ENCODE measurements at regions of chr7 and their contacts with region 1.

Region 1: GRCh38 chr7:50467817-50468610 is 17.9 kb upstream of the FIGNL1 start:
- DNase-seq: peak; percentile 89
- ATAC-seq: peak; percentile 96
- H3K4me3 Mint-ChIP-seq: no peak overlapping the region
- H3K27ac Mint-ChIP-seq: peak overlapping the region; percentile 24
- H3K4me1 Mint-ChIP-seq: peaks cover 13% of the 10 kb centered on the region
- H3K27me3 Mint-ChIP-seq: peaks cover 6% of the 10 kb centered on the region

Region 2: DNA sequence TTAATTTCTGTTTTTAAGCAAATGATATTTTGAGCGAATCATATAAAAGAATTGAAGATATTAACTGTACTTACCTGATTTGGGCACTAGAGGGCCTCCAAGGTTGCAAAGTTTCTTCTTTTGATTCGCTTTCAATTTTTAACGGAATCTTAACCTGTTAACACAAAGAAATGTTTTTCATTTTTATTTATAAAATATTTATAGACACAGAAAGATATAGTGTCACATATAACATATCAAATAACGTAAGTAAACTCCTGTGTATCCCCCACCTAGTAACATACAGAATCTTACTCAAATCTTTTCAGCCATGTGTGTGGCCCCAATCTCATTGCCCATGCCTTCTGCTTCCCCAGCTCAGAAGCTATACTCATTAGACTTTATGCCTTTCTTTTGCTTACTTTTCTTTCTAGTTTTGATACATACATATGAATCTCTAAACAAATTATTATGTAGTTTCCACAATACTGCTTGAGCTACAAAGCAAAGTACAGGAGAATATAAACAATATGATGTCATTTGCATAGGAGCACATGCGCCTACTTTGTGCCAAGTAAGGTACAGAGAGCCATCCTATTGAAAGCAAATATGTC is 325.5 kb before region 1 on chr7:
- CTCF ChIA-PET with region 1: interaction called, 14 read pairs
- DNase-seq: no peak
- ATAC-seq: peak; percentile 67
- H3K4me3 Mint-ChIP-seq: peak overlapping the region; percentile 50
- H3K27ac Mint-ChIP-seq: peak overlapping the region; percentile 81
- H3K4me1 Mint-ChIP-seq: peaks cover 28% of the 10 kb centered on the region
- H3K27me3 Mint-ChIP-seq: peaks cover 16% of the 10 kb centered on the region

Region 3: GRCh38 chr7:50382455-50382854 is 85.6 kb before region 1 on chr7:
- CTCF ChIA-PET with region 1: no interaction called
- DNase-seq: no peak
- ATAC-seq: no peak
- H3K4me3 Mint-ChIP-seq: no peak overlapping the region
- H3K27ac Mint-ChIP-seq: no peak overlapping the region
- H3K4me1 Mint-ChIP-seq: peaks cover 39% of the 10 kb centered on the region
- H3K27me3 Mint-ChIP-seq: no peaks in the 10 kb centered on the region

Region 4: GRCh38 chr7:50614721-50615518 is 146.9 kb after region 1 on chr7:
- CTCF ChIA-PET with region 1: interaction called, 13 read pairs
- DNase-seq: peak; percentile 55
- ATAC-seq: peak; percentile 54
- H3K4me3 Mint-ChIP-seq: no peak overlapping the region
- H3K27ac Mint-ChIP-seq: no peak overlapping the region
- H3K4me1 Mint-ChIP-seq: peaks cover 35% of the 10 kb centered on the region
- H3K27me3 Mint-ChIP-seq: peaks cover 39% of the 10 kb centered on the region

Region 5: GRCh38 chr7:50661345-50662040 is 193.5 kb after region 1 on chr7:
- CTCF ChIA-PET with region 1: interaction called, 18 read pairs
- DNase-seq: peak; percentile 83
- ATAC-seq: peak; percentile 35
- H3K4me3 Mint-ChIP-seq: peak overlapping the region; percentile 74
- H3K27ac Mint-ChIP-seq: peak overlapping the region; percentile 99
- H3K4me1 Mint-ChIP-seq: peaks cover 86% of the 10 kb centered on the region
- H3K27me3 Mint-ChIP-seq: no peaks in the 10 kb centered on the region

Region 6: GRCh38 chr7:50679218-50680007 is 211.4 kb after region 1 on chr7:
- CTCF ChIA-PET with region 1: interaction called, 77 read pairs
- DNase-seq: no peak
- ATAC-seq: peak; percentile 86
- H3K4me3 Mint-ChIP-seq: no peak overlapping the region
- H3K27ac Mint-ChIP-seq: no peak overlapping the region
- H3K4me1 Mint-ChIP-seq: peaks cover 3% of the 10 kb centered on the region
- H3K27me3 Mint-ChIP-seq: peaks cover 41% of the 10 kb centered on the region

Region 7: DNA sequence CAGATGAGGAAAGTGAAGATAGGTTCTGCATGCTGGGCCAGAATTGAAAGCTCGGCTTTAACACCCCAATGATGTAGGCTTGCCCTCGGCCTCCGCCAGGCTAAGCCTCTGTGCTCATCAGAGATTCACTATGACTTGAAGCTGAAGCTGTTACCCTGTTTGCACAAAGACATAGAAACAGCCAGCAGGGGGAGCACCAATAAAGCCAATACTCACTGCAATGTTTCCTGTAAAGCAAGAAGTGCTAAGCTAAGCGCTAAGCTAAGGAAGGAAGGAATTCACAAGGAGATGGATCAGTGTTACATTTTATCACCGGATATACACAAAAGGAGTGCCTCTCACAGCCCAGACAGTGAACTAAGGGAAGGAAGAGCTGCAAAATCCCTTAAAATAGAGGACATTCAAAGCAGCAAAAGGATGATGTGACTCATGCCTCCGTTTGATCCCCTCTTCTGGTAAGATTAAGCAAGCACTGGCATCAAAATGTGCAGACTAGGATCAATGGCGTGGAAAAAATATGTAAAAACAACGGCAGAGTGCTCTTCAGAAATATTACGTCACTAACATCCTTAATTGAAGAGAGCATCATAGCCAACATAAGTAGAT is 694.8 kb after region 1 on chr7:
- CTCF ChIA-PET with region 1: interaction called, 25 read pairs
- DNase-seq: peak; percentile 84
- ATAC-seq: peak; percentile 94
- H3K4me3 Mint-ChIP-seq: no peak overlapping the region
- H3K27ac Mint-ChIP-seq: no peak overlapping the region
- H3K4me1 Mint-ChIP-seq: peaks cover 6% of the 10 kb centered on the region
- H3K27me3 Mint-ChIP-seq: peaks cover 37% of the 10 kb centered on the region

Measured in activated CD8-positive, alpha-beta memory T cell treated with anti-CD3 and anti-CD28 coated beads, Interleukin-2, amount 10 ng/mL, durations not matched to agents 7 days and 5 days (primary cell).